Ovary (tissue), 10 donors: ENCODE measurements at regions of chr5 and their contacts with region 1.

Region 1: GRCh38 chr5:134527146-134527960 is 1.9 kb downstream of the JADE2 start:
- DNase-seq: peak; percentile 82 to 88 (median 85)
- H3K4me3 ChIP-seq: peak overlapping the region; percentile 90
- H3K27ac ChIP-seq: peak overlapping the region; percentile 92 to 96
- H3K4me1 ChIP-seq: peaks cover 35% of the 10 kb centered on the region
- H3K27me3 ChIP-seq: no peaks in the 10 kb centered on the region
- CTCF ChIP-seq: peak; percentile 57 to 95 (median 92)
- EP300 ChIP-seq: no peak
- POLR2A ChIP-seq: peak; percentile 41

Region 2: GRCh38 chr5:134370871-134371833 is 156.2 kb before region 1 on chr5 and contains the start of gene UBE2B:
- intact Hi-C with region 1: loop called in 1 of 4 experiments (anchors 5 kb)
- DNase-seq: peak; percentile 97 to 99 (median 98)
- H3K4me3 ChIP-seq: peak within 1 kb of the TSS; percentile 97
- H3K27ac ChIP-seq: peak within 1 kb of the TSS; percentile 89 to 97
- H3K4me1 ChIP-seq: peaks cover 6% of the 10 kb centered on the region
- H3K27me3 ChIP-seq: no peaks in the 10 kb centered on the region
- CTCF ChIP-seq: no peak
- EP300 ChIP-seq: peak; percentile 87
- POLR2A ChIP-seq: peak; percentile 94
- total RNA-seq, gene UBE2B: 54.1 to 101 (median 68.1) TPM

Region 3: GRCh38 chr5:134411546-134412266 is 115.6 kb before region 1 on chr5 and contains the start of gene CDKN2AIPNL:
- intact Hi-C with region 1: loop called in 3 of 4 experiments (anchors 2 to 5 kb)
- DNase-seq: peak; percentile 88 to 94 (median 90)
- H3K4me3 ChIP-seq: peak within 1 kb of the TSS; percentile 93
- H3K27ac ChIP-seq: peak within 1 kb of the TSS in 1 of 2 donors; percentile 9
- H3K4me1 ChIP-seq: peaks cover 5% of the 10 kb centered on the region
- H3K27me3 ChIP-seq: no peaks in the 10 kb centered on the region
- CTCF ChIP-seq: peak; percentile 69 to 88 (median 85)
- EP300 ChIP-seq: no peak
- POLR2A ChIP-seq: peak; percentile 40
- total RNA-seq, gene CDKN2AIPNL: 12.2 to 18.0 (median 15.3) TPM

Region 4: DNA sequence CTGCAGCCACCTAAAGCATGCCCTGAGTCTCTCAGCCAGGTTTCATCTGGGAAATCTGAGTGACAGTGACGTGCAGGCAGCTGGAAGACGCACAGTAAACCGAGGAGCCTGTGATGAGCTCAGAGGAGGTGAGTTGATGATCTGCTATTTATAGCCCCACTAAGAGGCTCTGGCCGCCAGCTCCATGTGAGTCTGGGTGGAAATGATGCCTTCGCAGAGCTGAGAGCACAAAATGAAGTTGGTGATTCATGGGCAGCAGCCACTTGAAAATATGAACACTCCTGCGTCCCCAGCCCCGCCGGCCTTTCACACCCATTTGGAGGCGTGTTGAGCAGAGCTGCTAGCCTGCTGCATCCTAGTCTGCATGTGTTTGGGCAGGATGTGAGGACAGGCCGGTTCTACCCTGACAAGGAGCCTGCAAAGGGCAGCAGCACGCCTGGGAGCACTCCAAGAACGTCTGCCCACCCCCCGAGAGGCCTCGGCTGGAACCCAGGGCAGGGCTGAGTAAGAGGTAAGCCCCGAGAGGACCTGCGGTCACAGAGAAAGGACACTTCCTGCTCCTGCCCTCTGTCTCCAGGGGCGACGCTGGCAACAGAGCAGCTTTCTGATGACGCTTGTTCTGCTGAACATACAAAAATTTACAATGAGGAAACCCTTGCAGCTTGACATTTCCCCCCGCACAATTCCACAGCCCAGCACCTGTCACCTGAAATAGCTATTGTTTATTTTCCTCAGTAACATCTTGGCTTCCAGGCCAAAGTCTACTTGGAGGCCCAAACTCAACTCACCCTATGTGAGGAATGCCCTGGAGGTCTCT is 90.6 kb before region 1 on chr5:
- intact Hi-C with region 1: no loop called
- DNase-seq: peak in 1 of 5 donors; percentile 38
- H3K4me3 ChIP-seq: no peak overlapping the region
- H3K27ac ChIP-seq: no peak overlapping the region
- H3K4me1 ChIP-seq: peaks cover 12% of the 10 kb centered on the region
- H3K27me3 ChIP-seq: no peaks in the 10 kb centered on the region
- CTCF ChIP-seq: no peak
- EP300 ChIP-seq: no peak
- POLR2A ChIP-seq: no peak

Region 5: DNA sequence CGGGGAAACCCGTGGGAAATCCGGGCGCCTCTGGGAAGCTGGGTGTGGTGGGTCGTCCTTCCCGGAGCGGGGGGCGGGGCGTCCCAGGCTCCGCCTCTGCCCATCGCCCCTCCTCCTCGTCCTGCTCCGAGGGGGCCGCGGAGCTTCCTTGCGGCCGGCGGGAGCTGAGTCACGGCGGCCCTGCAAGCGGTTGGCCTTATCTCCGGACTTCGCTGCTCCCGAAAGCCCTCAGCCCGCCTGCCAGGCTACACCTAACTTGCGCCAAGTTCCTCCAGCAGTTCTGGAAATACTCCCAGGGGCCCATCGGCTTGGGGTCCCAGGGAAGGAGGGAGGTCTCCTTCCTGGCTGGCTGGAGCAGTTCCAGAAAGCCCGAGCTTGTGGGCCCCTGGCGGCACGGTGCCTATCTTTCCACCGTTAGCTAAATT is 61.5 kb before region 1 on chr5:
- intact Hi-C with region 1: loop called in 2 of 4 experiments (anchors 5 kb)
- DNase-seq: peak; percentile 88 to 95 (median 91)
- H3K4me3 ChIP-seq: peak overlapping the region; percentile 59
- H3K27ac ChIP-seq: peak overlapping the region; percentile 18 to 81
- H3K4me1 ChIP-seq: peaks cover 13% of the 10 kb centered on the region
- H3K27me3 ChIP-seq: no peaks in the 10 kb centered on the region
- CTCF ChIP-seq: peak in 1 of 3 donors; percentile 26
- EP300 ChIP-seq: no peak
- POLR2A ChIP-seq: peak; percentile 67

Region 6: DNA sequence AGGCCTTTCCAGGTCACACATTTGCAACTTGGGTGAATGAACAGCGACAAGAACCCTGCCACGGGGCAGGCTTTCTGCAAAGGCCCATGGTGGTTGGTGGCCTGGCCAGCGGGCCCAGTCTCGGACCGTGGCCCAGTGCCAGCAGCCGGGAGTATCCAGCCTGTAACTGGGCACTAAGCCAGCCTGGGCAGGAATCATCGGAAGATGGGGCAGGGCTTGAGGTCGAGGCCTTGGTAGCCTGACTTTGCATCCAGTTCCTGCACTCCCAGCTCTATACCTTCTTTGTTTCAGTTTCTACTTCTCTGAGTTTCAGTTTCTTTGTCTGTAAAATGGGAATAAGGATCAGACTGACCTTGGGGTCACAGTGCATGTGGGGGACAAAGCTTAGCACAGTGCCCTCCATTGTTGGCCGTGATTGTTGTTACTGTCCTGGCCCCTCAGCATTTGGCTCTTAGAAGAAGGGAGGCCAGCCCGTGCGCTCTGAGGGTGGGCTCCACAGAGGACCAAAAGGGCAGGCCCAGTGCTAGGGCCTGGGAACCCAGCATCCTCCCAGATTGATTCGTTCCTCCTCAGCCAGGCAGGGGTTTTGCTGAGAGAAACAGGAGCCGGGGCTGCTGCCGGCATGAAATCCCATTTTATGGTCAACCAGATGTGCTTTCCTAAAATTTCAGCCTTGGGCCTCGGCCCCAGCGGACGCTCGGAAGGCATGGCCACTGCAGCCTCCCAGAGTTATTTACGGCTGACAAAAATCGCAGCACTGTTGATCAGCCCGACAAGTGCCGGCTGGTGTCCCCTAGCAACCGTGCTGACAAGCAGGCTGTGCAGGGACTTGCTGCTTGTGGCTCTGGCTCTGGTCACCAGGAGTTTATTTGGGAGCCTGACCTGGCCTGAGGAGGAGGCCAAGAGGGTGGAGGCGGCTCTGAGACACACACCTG is 41.7 kb after region 1 on chr5:
- intact Hi-C with region 1: loop called in 2 of 4 experiments (anchors 5 kb)
- DNase-seq: peak; percentile 69 to 84 (median 74)
- H3K4me3 ChIP-seq: no peak overlapping the region
- H3K27ac ChIP-seq: peak overlapping the region in 1 of 2 donors; percentile 7
- H3K4me1 ChIP-seq: peaks cover 17% of the 10 kb centered on the region
- H3K27me3 ChIP-seq: no peaks in the 10 kb centered on the region
- CTCF ChIP-seq: no peak
- EP300 ChIP-seq: no peak
- POLR2A ChIP-seq: no peak

Region 7: GRCh38 chr5:134577796-134578363 is 50.5 kb after region 1 on chr5:
- intact Hi-C with region 1: loop called in 1 of 4 experiments (anchors 5 kb)
- DNase-seq: peak; percentile 73 to 89 (median 84)
- H3K4me3 ChIP-seq: no peak overlapping the region
- H3K27ac ChIP-seq: no peak overlapping the region
- H3K4me1 ChIP-seq: no peaks in the 10 kb centered on the region
- H3K27me3 ChIP-seq: no peaks in the 10 kb centered on the region
- CTCF ChIP-seq: peak; percentile 59 to 77 (median 70)
- EP300 ChIP-seq: no peak
- POLR2A ChIP-seq: no peak